GM12878 (cell line): ENCODE measurements at regions of chr6 and their contacts with region 1.

Region 1: DNA sequence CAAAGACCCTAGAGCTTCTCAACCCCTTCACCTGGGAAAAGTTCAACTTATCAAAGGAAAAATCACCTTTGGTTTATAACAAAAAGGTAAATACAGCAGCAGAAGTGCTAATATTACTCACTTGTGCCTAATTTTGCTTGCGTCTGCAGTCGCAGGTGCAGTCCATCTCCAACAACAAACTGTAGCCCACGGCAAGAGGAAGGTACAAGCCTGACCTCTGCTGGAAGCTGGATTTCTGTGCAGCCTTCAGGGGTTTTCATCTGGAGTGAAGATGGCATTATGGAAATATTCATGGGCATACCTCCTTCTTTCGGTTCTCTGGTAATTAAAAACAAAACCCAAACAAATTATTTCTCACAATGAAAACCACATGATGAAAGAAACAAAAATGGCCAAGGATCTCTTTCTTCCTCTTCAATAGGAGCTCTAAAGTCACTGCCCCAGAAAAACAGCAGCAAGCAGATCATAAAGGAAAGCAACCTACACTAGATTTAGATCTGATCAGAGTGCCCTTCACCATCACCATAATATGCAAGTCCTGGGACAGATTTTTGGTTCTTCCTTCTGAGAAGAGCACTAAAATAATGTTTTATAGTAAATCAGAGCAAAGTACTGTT is 7.8 kb downstream of the UBE3D start:
- DNase-seq: no peak
- ATAC-seq: peak; percentile 92
- H3K4me3 ChIP-seq: no peak overlapping the region
- H3K27ac ChIP-seq: no peak overlapping the region
- H3K4me1 ChIP-seq: no peaks in the 10 kb centered on the region; the same call in 1 of the 2 replicates
- H3K27me3 ChIP-seq: no peaks in the 10 kb centered on the region
- CTCF ChIP-seq: peak; percentile 79 to 87 (median 81)
- EP300 ChIP-seq: no peak
- POLR2A ChIP-seq: no peak
- RAD21 ChIP-seq: peak; percentile 84

Region 2: GRCh38 chr6:82270881-82271645 is 786.8 kb before region 1 on chr6:
- CTCF ChIA-PET with region 1: interaction called, 98 read pairs
- POLR2A ChIA-PET with region 1: no interaction called
- RAD21 ChIA-PET with region 1: interaction called, 33 read pairs
- SMC1A ChIA-PET with region 1: interaction called, 28 read pairs
- in situ Hi-C with region 1: no loop called
- intact Hi-C with region 1: loop called (anchors 1 kb)
- DNase-seq: peak; percentile 15
- ATAC-seq: peak; percentile 79
- H3K4me3 ChIP-seq: no peak overlapping the region
- H3K27ac ChIP-seq: no peak overlapping the region
- H3K4me1 ChIP-seq: no peaks in the 10 kb centered on the region
- H3K27me3 ChIP-seq: no peaks in the 10 kb centered on the region
- CTCF ChIP-seq: peak; percentile 45 to 65 (median 50)
- EP300 ChIP-seq: no peak
- POLR2A ChIP-seq: no peak
- RAD21 ChIP-seq: peak; percentile 84

Region 3: DNA sequence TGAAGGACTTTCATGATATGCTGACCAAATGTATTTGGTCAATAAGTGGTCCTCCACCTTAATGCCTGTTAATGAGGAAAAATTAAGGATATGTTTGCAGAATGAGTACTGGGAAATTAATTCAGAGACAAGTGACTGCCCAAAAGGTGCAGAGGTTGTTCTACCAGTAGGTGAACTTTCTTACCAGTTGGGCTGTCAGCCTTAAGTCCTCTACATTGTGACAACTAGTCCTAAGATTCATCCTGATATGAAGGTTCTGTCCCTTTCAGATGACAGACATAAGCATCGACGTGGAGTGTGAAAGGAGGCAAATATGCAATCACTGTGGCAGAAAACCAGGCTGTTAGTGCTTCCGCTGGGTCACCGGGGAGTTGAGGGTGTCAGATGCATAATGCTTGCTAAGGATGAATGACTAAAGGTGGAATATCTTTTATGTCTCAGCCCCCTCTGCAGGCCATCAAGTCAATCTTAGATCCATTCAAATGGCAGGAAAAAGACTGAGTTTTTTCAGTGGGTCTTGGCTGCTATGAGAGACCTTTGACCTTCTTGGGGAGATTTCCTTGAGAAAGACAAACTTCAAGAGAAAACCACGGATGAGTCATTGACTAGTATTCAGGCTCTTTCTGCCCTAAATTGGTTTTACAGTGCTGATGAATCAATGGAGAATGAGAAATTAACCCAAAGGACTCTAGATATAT is 468.2 kb before region 1 on chr6:
- CTCF ChIA-PET with region 1: interaction called, 3 read pairs
- POLR2A ChIA-PET with region 1: interaction called, 6 read pairs
- RAD21 ChIA-PET with region 1: interaction called, 4 read pairs
- SMC1A ChIA-PET with region 1: no interaction called
- in situ Hi-C with region 1: no loop called
- intact Hi-C with region 1: loop called (anchors 2 kb)
- DNase-seq: peak; percentile 60
- ATAC-seq: peak; percentile 96
- H3K4me3 ChIP-seq: no peak overlapping the region
- H3K27ac ChIP-seq: no peak overlapping the region
- H3K4me1 ChIP-seq: no peaks in the 10 kb centered on the region
- H3K27me3 ChIP-seq: no peaks in the 10 kb centered on the region
- CTCF ChIP-seq: peak; percentile 28 to 63 (median 33); a peak in 4 of 6 replicates
- EP300 ChIP-seq: no peak
- POLR2A ChIP-seq: no peak
- RAD21 ChIP-seq: peak; percentile 62

Region 4: DNA sequence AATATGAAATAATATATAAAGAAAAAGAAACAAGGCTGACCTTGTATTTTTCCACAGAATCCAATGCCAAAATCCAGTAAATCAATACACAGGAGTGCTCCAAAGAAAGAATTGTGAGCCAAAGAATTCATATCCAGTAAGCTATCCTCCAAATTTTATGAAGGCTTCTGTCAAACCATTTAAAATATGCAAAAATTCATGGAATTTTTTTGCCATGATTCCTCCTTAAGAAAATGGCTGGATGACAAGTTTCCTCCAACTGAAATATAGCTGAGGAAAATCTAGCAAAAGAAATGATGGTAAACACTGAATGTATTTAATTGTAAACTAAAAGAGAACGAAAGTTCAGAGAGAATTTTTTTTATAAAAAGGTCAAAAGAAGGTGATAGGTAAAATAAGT is 282.5 kb before region 1 on chr6:
- CTCF ChIA-PET with region 1: no interaction called
- POLR2A ChIA-PET with region 1: no interaction called
- RAD21 ChIA-PET with region 1: no interaction called
- SMC1A ChIA-PET with region 1: no interaction called
- in situ Hi-C with region 1: no loop called
- intact Hi-C with region 1: loop called (anchors 10 kb)
- DNase-seq: no peak
- ATAC-seq: no peak
- H3K4me3 ChIP-seq: no peak overlapping the region
- H3K27ac ChIP-seq: no peak overlapping the region
- H3K4me1 ChIP-seq: no peaks in the 10 kb centered on the region
- H3K27me3 ChIP-seq: no peaks in the 10 kb centered on the region
- CTCF ChIP-seq: no peak
- EP300 ChIP-seq: no peak
- POLR2A ChIP-seq: no peak
- RAD21 ChIP-seq: no peak

Region 5: DNA sequence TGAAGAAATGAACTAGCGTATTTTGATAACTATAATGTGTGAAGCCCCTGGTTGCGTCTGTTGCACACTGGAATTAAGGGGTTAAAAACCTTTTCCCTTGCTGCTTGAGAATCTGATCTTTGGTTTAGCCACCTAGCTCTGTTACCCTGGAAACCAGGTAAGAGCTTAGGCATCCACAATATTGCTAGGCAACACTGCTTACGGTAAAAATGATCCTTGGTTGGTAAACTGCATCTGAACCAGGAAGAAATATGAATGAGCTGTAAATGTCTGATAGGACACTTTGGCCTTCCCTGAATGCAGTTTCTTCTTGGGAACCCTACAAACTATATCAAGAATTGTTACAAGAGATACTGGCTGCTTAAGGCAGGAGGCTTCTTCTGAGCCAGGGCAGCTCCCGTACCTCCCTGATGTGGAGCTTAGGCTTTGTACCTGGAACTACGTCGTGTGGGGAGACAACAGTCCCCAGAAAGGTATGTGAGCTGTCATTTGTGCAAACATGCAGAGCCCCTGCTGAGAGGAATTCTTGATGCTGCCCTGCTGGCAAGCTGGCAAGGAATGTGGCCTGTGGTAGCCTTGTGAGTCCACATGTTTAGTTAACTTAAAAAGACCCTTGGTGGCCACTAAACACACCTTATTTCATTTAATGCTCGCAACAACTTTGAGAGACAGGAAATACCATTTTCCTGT is 10.6 kb before region 1 on chr6:
- CTCF ChIA-PET with region 1: interaction called, 20 read pairs
- POLR2A ChIA-PET with region 1: no interaction called
- RAD21 ChIA-PET with region 1: interaction called, 4 read pairs
- SMC1A ChIA-PET with region 1: interaction called, 3 read pairs
- in situ Hi-C with region 1: no loop called
- intact Hi-C with region 1: no loop called
- DNase-seq: no peak
- ATAC-seq: no peak
- H3K4me3 ChIP-seq: no peak overlapping the region
- H3K27ac ChIP-seq: no peak overlapping the region
- H3K4me1 ChIP-seq: no peaks in the 10 kb centered on the region
- H3K27me3 ChIP-seq: no peaks in the 10 kb centered on the region
- CTCF ChIP-seq: no peak
- EP300 ChIP-seq: no peak
- POLR2A ChIP-seq: no peak
- RAD21 ChIP-seq: no peak

Region 6: DNA sequence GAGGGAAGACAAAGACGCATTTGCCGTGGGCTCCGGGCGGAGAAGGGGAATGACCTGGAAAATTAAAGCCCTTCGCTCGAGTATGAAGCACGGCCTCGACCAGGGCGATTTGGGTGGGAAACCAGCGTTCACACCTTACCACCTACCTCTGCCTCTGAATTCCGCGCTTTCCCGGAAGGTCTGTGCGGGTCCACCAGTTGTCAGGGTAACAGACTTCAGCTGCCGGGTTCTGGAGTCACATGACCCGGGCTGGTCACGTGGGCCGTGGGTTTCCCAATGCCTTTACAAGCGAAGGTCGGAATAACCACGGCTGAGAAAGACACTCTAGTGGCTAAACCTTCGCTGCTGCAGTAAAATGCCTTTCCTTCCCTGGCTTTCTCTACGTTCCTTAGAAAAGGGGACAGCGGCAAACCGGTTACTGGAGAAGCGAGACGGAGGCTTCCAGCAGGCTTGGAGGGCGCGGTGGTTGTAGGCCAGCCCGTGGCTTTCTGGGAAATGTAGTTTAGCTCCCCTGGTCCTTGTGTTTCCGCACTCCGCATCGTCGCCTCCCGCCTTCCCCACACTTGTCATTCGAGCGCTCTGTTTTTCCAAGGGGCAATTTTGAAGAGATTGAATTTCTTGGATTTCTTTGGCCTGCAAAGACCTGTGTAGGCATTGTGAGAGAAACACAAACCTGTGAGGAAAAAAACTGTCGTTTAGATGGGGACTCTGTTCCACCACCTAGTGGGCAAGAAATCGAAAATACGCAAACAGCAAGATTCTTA is 1169.8 kb after region 1 on chr6 and contains the start of gene CEP162:
- CTCF ChIA-PET with region 1: no interaction called
- POLR2A ChIA-PET with region 1: no interaction called
- RAD21 ChIA-PET with region 1: no interaction called
- SMC1A ChIA-PET with region 1: no interaction called
- in situ Hi-C with region 1: no loop called
- intact Hi-C with region 1: no loop called
- DNase-seq: peak; percentile 79
- ATAC-seq: peak; percentile 98
- H3K4me3 ChIP-seq: peak within 1 kb of the TSS; percentile 95
- H3K27ac ChIP-seq: peak within 1 kb of the TSS; percentile 51
- H3K4me1 ChIP-seq: no peaks in the 10 kb centered on the region
- H3K27me3 ChIP-seq: no peaks in the 10 kb centered on the region
- CTCF ChIP-seq: peak; percentile 59 to 69 (median 60)
- EP300 ChIP-seq: no peak
- POLR2A ChIP-seq: peak; percentile 52
- RAD21 ChIP-seq: peak; percentile 28
- polyA plus RNA-seq, gene CEP162: 2.7 to 2.8 TPM